K562 (cell line): ENCODE measurements at regions of chr11 and their contacts with region 1.

Region 1: DNA sequence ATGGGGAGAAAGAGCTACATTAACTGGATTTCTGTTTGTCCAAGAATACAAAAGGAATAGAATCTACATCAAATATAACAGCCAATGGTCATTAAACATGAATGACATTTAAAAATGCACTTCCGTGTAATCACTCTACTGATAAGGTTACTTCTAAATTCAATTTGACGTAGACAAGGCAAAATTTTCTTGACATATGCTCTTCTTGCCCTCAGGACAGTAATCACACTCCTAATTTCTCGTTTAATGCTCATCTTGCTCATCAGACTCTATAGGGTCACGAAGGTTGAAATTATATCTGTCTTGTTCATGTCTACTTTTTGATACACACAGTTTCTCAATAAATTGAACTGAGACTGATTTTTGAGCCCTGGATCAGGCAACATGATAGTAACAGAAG is 58.4 kb downstream of the NARS2 start:
- DNase-seq: no peak
- ATAC-seq: no peak
- H3K4me3 ChIP-seq: no peak overlapping the region
- H3K27ac ChIP-seq: no peak overlapping the region
- H3K4me1 ChIP-seq: no peaks in the 10 kb centered on the region
- H3K27me3 ChIP-seq: no peaks in the 10 kb centered on the region
- CTCF ChIP-seq: no peak
- EP300 ChIP-seq: no peak
- POLR2A ChIP-seq: no peak
- RAD21 ChIP-seq: no peak

Region 2: GRCh38 chr11:78492973-78493372 is 23.3 kb before region 1 on chr11:
- CTCF ChIA-PET with region 1: no interaction called
- POLR2A ChIA-PET with region 1: interaction called, 3 read pairs
- in situ Hi-C with region 1: no loop called
- intact Hi-C with region 1: loop called (anchors 1 kb)
- DNase-seq: no peak
- ATAC-seq: no peak
- H3K4me3 ChIP-seq: no peak overlapping the region
- H3K27ac ChIP-seq: no peak overlapping the region
- H3K4me1 ChIP-seq: no peaks in the 10 kb centered on the region
- H3K27me3 ChIP-seq: no peaks in the 10 kb centered on the region
- CTCF ChIP-seq: no peak
- EP300 ChIP-seq: no peak
- POLR2A ChIP-seq: no peak
- RAD21 ChIP-seq: no peak

Region 3: GRCh38 chr11:78504181-78504580 is 12.1 kb before region 1 on chr11:
- CTCF ChIA-PET with region 1: no interaction called
- POLR2A ChIA-PET with region 1: no interaction called
- in situ Hi-C with region 1: no loop called
- intact Hi-C with region 1: no loop called
- DNase-seq: no peak
- ATAC-seq: no peak
- H3K4me3 ChIP-seq: no peak overlapping the region
- H3K27ac ChIP-seq: no peak overlapping the region
- H3K4me1 ChIP-seq: peaks cover 0 to 14% of the 10 kb centered on the region in 2 experiments; a peak in 2 of 5 replicates
- H3K27me3 ChIP-seq: no peaks in the 10 kb centered on the region
- CTCF ChIP-seq: no peak
- EP300 ChIP-seq: no peak
- POLR2A ChIP-seq: no peak
- RAD21 ChIP-seq: no peak